Prostate gland (tissue), 2 donors: ENCODE measurements at regions of chr1 and their contacts with region 1.

Region 1: GRCh38 chr1:169546087-169546995 is 39.9 kb downstream of the F5 start:
- DNase-seq: peak; percentile 73
- H3K4me3 ChIP-seq: no peak overlapping the region
- H3K27ac ChIP-seq: no peak overlapping the region
- H3K4me1 ChIP-seq: no peaks in the 10 kb centered on the region
- H3K27me3 ChIP-seq: no peaks in the 10 kb centered on the region
- CTCF ChIP-seq: peak; percentile 29 to 91 (median 85)
- POLR2A ChIP-seq: no peak

Region 2: DNA sequence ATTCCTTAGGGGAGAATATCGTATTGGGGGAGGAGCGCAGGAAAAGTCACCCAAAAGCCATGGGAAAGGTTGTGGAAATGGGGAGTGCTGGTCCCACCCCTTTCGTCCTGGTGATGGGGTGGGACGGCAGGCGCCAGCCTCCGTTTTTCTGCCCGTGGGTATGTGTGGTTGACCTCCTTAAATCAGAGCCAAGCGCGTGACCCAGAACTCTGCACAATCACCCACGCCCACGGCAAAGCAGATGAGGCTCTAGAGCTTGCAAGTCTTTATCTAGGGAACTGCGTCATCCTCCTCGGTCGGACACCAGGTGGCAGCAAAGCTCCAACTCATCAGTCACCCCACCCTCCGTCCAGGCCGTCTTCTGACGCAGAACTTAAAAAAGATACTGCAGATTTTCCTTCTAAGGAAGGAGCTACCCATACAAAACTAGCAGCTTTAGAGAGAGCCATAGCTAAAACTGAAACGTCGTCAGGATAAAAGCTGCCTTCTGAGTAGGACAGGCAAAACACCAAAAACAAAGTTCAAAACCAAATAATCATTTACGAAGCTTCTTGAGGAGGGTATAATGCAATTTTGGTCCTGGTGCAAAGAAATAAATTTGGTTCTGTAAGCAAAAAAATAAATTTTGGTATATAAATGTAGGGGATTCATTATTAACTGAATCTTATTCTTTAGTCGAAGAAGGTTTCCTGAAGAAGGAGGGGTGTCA is 1203.6 kb before region 1 on chr1:
- intact Hi-C with region 1: loop called (anchors 5 kb)
- DNase-seq: peak; percentile 74
- H3K4me3 ChIP-seq: no peak overlapping the region
- H3K27ac ChIP-seq: peak overlapping the region in 1 of 2 donors; percentile 28
- H3K4me1 ChIP-seq: no peaks in the 10 kb centered on the region
- H3K27me3 ChIP-seq: no peaks in the 10 kb centered on the region
- CTCF ChIP-seq: peak; percentile 53 to 89 (median 83)
- POLR2A ChIP-seq: no peak

Region 3: GRCh38 chr1:168603501-168604110 is 942.7 kb before region 1 on chr1:
- intact Hi-C with region 1: loop called (anchors 10 kb)
- DNase-seq: peak; percentile 74
- H3K4me3 ChIP-seq: no peak overlapping the region
- H3K27ac ChIP-seq: no peak overlapping the region
- H3K4me1 ChIP-seq: no peaks in the 10 kb centered on the region
- H3K27me3 ChIP-seq: no peaks in the 10 kb centered on the region
- CTCF ChIP-seq: peak; percentile 56 to 85 (median 78)
- POLR2A ChIP-seq: no peak

Region 4: GRCh38 chr1:169250022-169250421 is 296.3 kb before region 1 on chr1:
- intact Hi-C with region 1: no loop called
- DNase-seq: no peak
- H3K4me3 ChIP-seq: no peak overlapping the region
- H3K27ac ChIP-seq: no peak overlapping the region
- H3K4me1 ChIP-seq: no peaks in the 10 kb centered on the region
- H3K27me3 ChIP-seq: no peaks in the 10 kb centered on the region
- CTCF ChIP-seq: no peak
- POLR2A ChIP-seq: no peak

Region 5: DNA sequence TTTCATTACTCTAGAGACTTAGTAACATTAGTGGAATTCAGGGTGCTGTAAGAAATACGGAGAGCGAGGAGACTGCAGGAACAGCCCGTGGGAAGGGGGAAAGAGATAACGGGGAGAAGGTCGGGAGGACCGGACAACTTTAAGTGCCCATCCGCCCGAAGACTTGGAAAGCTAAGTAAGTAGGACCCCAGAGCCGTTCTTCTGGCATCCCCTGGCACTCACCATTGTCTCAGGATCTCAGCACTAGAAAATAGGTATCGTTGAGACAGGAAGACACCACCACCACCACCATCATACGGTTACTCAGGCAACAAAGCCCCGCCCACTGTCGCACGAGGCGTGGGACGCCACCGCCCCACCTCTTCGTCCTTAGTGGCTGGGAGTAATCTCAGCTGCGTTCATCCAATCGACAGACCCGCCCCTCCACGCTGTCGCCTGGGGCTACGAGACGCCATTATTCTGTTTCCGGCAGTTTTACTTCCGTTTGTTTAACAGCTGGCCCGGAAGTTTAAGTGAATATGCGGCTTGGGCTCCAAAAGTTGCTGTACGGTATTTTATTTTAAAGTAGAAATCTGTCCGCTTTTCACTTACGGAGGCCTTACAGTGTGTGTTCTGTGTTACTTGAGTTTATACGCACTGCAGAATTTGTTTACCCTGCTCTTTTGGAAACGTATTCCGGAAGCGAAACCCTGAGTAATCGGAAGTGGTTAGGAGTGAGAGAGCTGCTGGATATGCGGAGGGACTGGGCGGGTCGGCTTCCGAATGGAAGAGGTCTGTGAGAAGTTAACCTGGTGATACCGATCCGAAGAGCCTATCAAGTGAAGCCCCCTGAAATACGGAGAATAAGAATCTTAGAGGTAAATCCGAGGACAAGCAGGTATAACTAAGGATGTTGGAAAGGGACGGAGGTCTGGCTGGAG is 178.6 kb before region 1 on chr1 and contains the starts of genes BLZF1 and NME7:
- intact Hi-C with region 1: loop called (anchors 10 kb)
- DNase-seq: peak; percentile 96
- H3K4me3 ChIP-seq: peak within 1 kb of the TSS; percentile 54 to 59
- H3K27ac ChIP-seq: peak within 1 kb of the TSS; percentile 82 to 86
- H3K4me1 ChIP-seq: no peaks in the 10 kb centered on the region
- H3K27me3 ChIP-seq: no peaks in the 10 kb centered on the region
- CTCF ChIP-seq: no peak
- POLR2A ChIP-seq: peak; percentile 31
- total RNA-seq, gene BLZF1: 18.8 to 21.7 TPM
- total RNA-seq, gene NME7: 10.3 to 16.3 TPM

Region 6: DNA sequence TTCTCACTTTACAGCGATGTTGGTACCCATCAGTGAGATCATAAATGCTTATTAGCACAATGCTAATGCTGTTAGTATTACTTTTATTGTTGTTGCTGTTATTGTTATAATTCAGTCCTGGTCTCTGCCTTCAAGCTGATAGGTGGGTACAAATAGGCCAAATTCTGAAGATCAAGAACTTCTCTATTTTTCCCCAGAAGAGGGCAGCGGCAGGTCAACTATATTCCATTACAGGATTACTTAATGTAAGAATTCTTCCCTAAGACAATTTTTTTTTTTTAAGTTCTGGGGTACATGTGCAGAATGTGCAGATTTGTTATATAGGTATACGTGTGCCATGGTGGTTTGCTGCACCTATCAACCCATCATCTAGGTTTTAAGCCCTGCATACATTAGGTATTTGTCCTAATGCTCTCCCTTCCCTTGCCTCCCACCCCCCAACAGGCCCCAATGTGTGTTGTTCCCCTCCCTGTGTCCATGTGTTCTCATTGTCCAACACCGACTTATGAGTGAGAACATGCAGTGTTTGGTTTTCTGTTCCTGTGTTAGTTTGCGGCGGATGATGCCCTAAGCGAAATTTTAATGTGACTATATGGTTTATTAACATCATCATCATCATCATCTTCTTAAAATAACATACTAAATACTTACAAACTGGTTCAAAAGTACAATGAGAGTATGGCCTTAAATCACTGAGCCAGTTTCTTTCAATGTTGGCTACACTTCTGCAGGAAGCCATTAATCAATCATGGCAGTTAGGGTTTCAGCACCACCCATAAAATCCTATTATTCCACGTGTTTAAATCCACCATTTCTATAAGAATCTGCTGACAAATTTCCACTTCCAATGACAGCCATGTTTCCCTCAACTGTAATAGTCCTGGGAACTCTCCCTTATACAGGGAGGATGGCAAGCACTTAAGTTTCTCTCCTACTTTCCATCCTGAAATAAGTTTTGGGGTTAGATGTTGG is 79.8 kb before region 1 on chr1:
- intact Hi-C with region 1: loop called (anchors 1 kb)
- DNase-seq: no peak
- H3K4me3 ChIP-seq: no peak overlapping the region
- H3K27ac ChIP-seq: no peak overlapping the region
- H3K4me1 ChIP-seq: no peaks in the 10 kb centered on the region
- H3K27me3 ChIP-seq: no peaks in the 10 kb centered on the region
- CTCF ChIP-seq: peak in 3 of 4 experiments; percentile 24 to 53 (median 43)
- POLR2A ChIP-seq: no peak

Region 7: DNA sequence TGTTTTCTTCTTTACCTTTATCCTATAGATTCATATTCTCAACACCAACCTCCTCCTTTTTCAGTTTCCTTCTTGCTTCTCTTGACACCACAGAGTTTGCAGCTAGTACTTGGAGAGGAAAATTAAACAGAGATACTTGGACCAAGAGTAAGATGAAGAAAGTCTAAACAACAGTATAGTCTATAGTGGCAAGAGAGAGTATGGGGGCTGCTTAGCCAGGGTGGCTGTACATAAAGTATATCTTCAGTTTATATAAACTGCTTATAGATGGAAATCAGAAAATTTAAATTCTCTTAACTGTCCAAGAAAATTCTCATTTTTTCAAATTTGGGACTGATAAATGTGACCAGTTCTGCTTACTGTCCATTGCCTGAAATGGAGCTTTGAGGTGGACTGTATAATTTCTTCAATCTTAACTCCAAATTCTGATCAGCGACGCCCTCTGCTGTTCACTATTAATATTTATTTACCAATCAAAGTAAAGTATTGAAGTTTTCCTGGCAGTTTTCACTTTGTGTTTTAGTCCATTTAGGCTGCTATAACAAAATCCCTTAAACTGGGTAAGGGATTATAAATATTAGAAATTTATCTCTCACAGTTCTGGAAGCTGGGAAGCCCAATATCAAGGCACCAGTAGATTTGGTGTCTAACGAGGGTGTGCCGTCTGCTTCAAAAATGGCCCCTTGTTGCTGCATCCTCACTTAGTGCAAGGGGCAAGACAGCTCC is 263.2 kb after region 1 on chr1:
- intact Hi-C with region 1: loop called (anchors 5 kb)
- DNase-seq: peak; percentile 42
- H3K4me3 ChIP-seq: no peak overlapping the region
- H3K27ac ChIP-seq: no peak overlapping the region
- H3K4me1 ChIP-seq: no peaks in the 10 kb centered on the region
- H3K27me3 ChIP-seq: no peaks in the 10 kb centered on the region
- CTCF ChIP-seq: peak; percentile 35 to 72 (median 67)
- POLR2A ChIP-seq: no peak

Region 8: GRCh38 chr1:169914531-169914930 is 368.2 kb after region 1 on chr1:
- intact Hi-C with region 1: no loop called
- DNase-seq: no peak
- H3K4me3 ChIP-seq: no peak overlapping the region
- H3K27ac ChIP-seq: no peak overlapping the region
- H3K4me1 ChIP-seq: no peaks in the 10 kb centered on the region
- H3K27me3 ChIP-seq: no peaks in the 10 kb centered on the region
- CTCF ChIP-seq: no peak
- POLR2A ChIP-seq: no peak